Activated CD4-positive, alpha-beta T cell treated with anti-CD3 and anti-CD28 coated beads, Interleukin-2, amount 10 ng/mL, durations not matched to agents 24 days and 14 days (primary cell): ENCODE measurements at regions of chr3 and their contacts with region 1.

Region 1: DNA sequence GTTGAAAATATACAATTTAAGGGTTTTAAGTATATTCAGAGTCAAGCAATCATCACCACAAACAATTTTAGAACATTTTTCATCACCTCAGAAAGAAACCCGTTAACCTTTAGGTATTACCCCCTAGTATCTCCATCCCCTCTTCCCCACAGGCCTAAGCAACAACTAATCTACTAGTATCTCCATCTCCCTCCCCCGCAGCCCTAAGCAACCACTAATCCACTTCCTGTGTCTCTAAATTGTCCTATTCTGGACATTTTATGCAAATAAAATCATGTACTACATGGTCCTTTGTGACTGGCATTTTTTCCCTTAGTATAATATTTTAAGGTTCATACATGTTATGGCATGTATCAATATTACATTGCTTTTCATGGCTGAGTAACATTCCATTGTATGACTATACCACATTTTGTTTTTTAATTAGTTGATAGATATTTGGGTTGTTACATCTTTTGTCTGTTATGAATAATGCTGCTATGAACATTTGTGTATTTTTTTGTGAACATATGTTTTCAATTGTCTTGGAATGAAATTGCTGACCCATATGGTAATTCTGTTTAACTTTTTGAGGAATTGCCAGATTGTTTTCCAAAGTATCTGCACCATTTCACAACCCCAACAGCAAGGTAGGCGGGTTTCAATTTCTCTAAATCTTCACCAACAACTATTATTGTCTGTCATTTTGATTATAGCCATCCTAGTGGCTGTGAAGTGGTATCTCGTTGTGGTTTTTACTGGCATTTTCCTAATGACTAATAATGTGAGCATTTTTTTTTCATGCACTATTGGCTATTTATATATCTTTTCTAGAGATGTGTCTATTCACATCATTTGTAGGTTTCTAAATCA is 215.6 kb upstream of the CD96 start:
- DNase-seq: no peak
- H3K4me3 Mint-ChIP-seq: peak overlapping the region; percentile 3
- H3K27ac Mint-ChIP-seq: peak overlapping the region; percentile 67
- H3K4me1 Mint-ChIP-seq: peaks cover 29% of the 10 kb centered on the region
- H3K27me3 Mint-ChIP-seq: no peaks in the 10 kb centered on the region

Region 2: DNA sequence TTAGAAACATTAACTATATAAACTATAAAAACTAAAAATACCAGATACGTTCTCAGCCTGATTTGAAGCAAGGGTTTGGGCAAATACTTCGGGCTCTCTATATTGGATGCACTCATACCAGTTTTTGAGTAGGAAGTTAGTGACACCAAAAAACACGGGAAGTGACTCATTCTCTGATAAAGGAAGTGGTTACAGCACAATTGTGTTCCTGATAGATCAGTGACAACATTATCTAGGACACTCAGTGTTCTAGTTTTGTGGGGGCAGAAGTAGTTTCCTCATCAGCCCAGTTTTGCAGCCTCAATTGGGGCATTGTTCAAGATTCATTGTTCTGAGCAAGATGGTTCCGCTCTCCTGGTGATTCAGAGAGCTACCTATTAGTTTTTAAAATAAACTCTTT is 1519.4 kb before region 1 on chr3:
- intact Hi-C with region 1: loop called (anchors 10 kb)
- DNase-seq: peak; percentile 84
- H3K4me3 Mint-ChIP-seq: peak overlapping the region; percentile 54
- H3K27ac Mint-ChIP-seq: peak overlapping the region; percentile 57
- H3K4me1 Mint-ChIP-seq: peaks cover 31% of the 10 kb centered on the region
- H3K27me3 Mint-ChIP-seq: peaks cover 7% of the 10 kb centered on the region

Region 3: GRCh38 chr3:111338059-111338698 is 11.8 kb after region 1 on chr3:
- intact Hi-C with region 1: loop called (anchors 1 kb)
- DNase-seq: peak; percentile 84
- H3K4me3 Mint-ChIP-seq: no peak overlapping the region
- H3K27ac Mint-ChIP-seq: no peak overlapping the region
- H3K4me1 Mint-ChIP-seq: peaks cover 24% of the 10 kb centered on the region
- H3K27me3 Mint-ChIP-seq: peaks cover 2% of the 10 kb centered on the region

Region 4: GRCh38 chr3:111392901-111393351 is 66.6 kb after region 1 on chr3:
- intact Hi-C with region 1: no loop called
- DNase-seq: peak; percentile 81
- H3K4me3 Mint-ChIP-seq: peak overlapping the region; percentile 11
- H3K27ac Mint-ChIP-seq: no peak overlapping the region
- H3K4me1 Mint-ChIP-seq: peaks cover 8% of the 10 kb centered on the region
- H3K27me3 Mint-ChIP-seq: no peaks in the 10 kb centered on the region

Region 5: GRCh38 chr3:111604119-111604518 is 277.7 kb after region 1 on chr3:
- intact Hi-C with region 1: loop called (anchors 5 kb)
- DNase-seq: peak; percentile 66
- H3K4me3 Mint-ChIP-seq: peak overlapping the region; percentile 40
- H3K27ac Mint-ChIP-seq: peak overlapping the region; percentile 91
- H3K4me1 Mint-ChIP-seq: peaks cover 74% of the 10 kb centered on the region
- H3K27me3 Mint-ChIP-seq: no peaks in the 10 kb centered on the region